Aorta (tissue), 5 donors: ENCODE measurements at regions of chr12 and their contacts with region 1.

Region 1: GRCh38 chr12:5499566-5500330 is 67.8 kb downstream of the NTF3 start:
- DNase-seq: no peak
- ATAC-seq: no peak
- H3K4me3 ChIP-seq: no peak overlapping the region
- H3K27ac ChIP-seq: no peak overlapping the region
- H3K4me1 ChIP-seq: no peaks in the 10 kb centered on the region
- H3K27me3 ChIP-seq: no peaks in the 10 kb centered on the region

Region 2: GRCh38 chr12:5096241-5096935 is 403.4 kb before region 1 on chr12:
- intact Hi-C with region 1: loop called in 1 of 2 experiments (anchors 10 kb)
- DNase-seq: no peak
- ATAC-seq: no peak
- H3K4me3 ChIP-seq: no peak overlapping the region
- H3K27ac ChIP-seq: no peak overlapping the region
- H3K4me1 ChIP-seq: no peaks in the 10 kb centered on the region
- H3K27me3 ChIP-seq: no peaks in the 10 kb centered on the region

Region 3: DNA sequence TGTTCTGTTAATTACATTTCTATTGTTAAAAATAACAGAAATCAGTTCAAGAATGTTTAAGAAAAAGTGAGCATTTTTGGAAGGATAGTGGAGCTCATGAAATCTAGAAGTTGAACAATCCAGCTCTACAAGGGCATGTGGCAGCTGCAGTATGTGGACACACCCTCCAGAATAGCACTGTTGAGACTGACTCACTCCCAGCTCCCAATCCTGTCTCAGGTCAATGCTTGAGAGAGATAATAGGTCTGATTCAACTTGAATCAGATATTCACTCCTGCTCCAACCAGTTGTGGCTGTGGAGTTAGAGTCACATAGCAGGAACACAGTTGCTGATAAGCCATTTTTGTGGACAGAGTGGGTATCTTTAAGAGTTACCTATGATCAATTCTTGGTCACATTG is 180.9 kb before region 1 on chr12:
- intact Hi-C with region 1: loop called in 1 of 2 experiments (anchors 10 kb)
- DNase-seq: no peak
- ATAC-seq: no peak
- H3K4me3 ChIP-seq: no peak overlapping the region
- H3K27ac ChIP-seq: no peak overlapping the region
- H3K4me1 ChIP-seq: no peaks in the 10 kb centered on the region
- H3K27me3 ChIP-seq: no peaks in the 10 kb centered on the region

Region 4: GRCh38 chr12:5328669-5329517 is 170.9 kb before region 1 on chr12:
- intact Hi-C with region 1: no loop called
- DNase-seq: no peak
- ATAC-seq: peak; percentile 38
- H3K4me3 ChIP-seq: no peak overlapping the region
- H3K27ac ChIP-seq: no peak overlapping the region
- H3K4me1 ChIP-seq: no peaks in the 10 kb centered on the region
- H3K27me3 ChIP-seq: no peaks in the 10 kb centered on the region

Region 5: GRCh38 chr12:5456906-5457305 is 42.8 kb before region 1 on chr12:
- intact Hi-C with region 1: loop called in 1 of 2 experiments (anchors 5 kb)
- DNase-seq: no peak
- ATAC-seq: no peak
- H3K4me3 ChIP-seq: no peak overlapping the region
- H3K27ac ChIP-seq: peak overlapping the region; percentile 31 to 98
- H3K4me1 ChIP-seq: peaks cover 12 to 17% of the 10 kb centered on the region in 2 donors
- H3K27me3 ChIP-seq: no peaks in the 10 kb centered on the region

Region 6: GRCh38 chr12:5588176-5588575 is 88.4 kb after region 1 on chr12:
- intact Hi-C with region 1: no loop called
- DNase-seq: no peak
- ATAC-seq: no peak
- H3K4me3 ChIP-seq: no peak overlapping the region
- H3K27ac ChIP-seq: no peak overlapping the region
- H3K4me1 ChIP-seq: no peaks in the 10 kb centered on the region
- H3K27me3 ChIP-seq: no peaks in the 10 kb centered on the region